ENCODE measurements at regions of chr6 and their contacts with region 1.

Region 1: DNA sequence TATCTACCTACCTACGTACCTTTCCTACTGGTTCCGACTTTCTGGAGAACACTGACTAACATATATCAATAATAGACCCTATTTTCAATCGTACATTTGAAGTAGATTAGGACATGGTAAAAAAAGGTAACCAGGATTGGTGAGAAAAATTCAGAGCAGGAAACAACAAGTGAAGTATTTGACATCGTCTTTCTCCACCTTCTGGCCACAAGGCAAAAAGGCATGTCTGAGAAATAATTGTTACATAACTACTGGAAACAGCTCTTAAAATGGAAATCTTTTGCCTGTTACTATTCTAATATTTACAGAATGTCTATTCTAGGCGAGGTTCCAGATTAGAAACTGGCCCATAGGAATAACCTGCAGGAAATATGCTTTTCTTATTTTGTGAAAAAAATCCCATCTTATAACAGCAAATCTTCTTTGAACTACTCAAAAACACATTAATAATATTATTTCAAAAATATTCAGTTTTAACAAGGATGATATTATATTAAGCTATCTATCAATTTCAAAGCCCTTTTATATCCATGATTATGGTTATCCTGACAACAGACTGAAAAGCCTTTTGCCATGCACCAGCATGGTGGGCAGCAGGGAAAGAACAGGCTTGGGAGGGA is 80.8 kb downstream of the RCAN2 start:
- DNase-seq: peak; percentile 26
- H3K4me3 Mint-ChIP-seq: no peak overlapping the region
- H3K27ac Mint-ChIP-seq: no peak overlapping the region
- H3K4me1 Mint-ChIP-seq: no peaks in the 10 kb centered on the region
- H3K27me3 Mint-ChIP-seq: peaks cover 5% of the 10 kb centered on the region

Region 2: GRCh38 chr6:46221222-46221793 is 189.1 kb before region 1 on chr6:
- CTCF ChIA-PET with region 1: interaction called, 19 read pairs
- POLR2A ChIA-PET with region 1: no interaction called
- DNase-seq: no peak
- H3K4me3 Mint-ChIP-seq: no peak overlapping the region
- H3K27ac Mint-ChIP-seq: no peak overlapping the region
- H3K4me1 Mint-ChIP-seq: peaks cover 5% of the 10 kb centered on the region
- H3K27me3 Mint-ChIP-seq: peaks cover 15% of the 10 kb centered on the region

Region 3: DNA sequence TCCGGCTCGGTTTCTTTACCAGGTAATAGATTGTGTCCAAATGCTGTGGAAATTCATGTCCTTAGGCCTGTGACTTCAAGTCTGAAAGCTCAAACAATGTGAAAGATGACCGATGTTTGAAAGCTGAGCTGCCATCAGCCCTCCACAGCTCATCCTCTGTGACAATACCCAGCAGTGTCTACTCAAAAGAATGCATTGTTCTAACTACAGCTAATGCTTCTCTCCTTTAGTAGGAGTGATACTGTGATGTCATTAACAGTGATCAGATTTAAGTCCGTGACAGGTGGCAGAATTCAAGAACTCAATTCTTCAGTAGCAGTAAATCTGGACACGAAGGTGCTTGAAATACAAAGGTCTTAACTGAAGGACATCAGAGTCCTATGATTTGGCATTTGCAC is 16.5 kb before region 1 on chr6:
- CTCF ChIA-PET with region 1: no interaction called
- POLR2A ChIA-PET with region 1: no interaction called
- DNase-seq: no peak
- H3K4me3 Mint-ChIP-seq: no peak overlapping the region
- H3K27ac Mint-ChIP-seq: no peak overlapping the region
- H3K4me1 Mint-ChIP-seq: no peaks in the 10 kb centered on the region
- H3K27me3 Mint-ChIP-seq: peaks cover 27% of the 10 kb centered on the region

Region 4: GRCh38 chr6:46565531-46565930 is 155.1 kb after region 1 on chr6:
- CTCF ChIA-PET with region 1: no interaction called
- POLR2A ChIA-PET with region 1: no interaction called
- DNase-seq: no peak
- H3K4me3 Mint-ChIP-seq: no peak overlapping the region
- H3K27ac Mint-ChIP-seq: no peak overlapping the region
- H3K4me1 Mint-ChIP-seq: no peaks in the 10 kb centered on the region
- H3K27me3 Mint-ChIP-seq: peaks cover 16% of the 10 kb centered on the region